T-cell (primary cell): ENCODE measurements at regions of chr13 and their contacts with region 1.

Region 1: DNA sequence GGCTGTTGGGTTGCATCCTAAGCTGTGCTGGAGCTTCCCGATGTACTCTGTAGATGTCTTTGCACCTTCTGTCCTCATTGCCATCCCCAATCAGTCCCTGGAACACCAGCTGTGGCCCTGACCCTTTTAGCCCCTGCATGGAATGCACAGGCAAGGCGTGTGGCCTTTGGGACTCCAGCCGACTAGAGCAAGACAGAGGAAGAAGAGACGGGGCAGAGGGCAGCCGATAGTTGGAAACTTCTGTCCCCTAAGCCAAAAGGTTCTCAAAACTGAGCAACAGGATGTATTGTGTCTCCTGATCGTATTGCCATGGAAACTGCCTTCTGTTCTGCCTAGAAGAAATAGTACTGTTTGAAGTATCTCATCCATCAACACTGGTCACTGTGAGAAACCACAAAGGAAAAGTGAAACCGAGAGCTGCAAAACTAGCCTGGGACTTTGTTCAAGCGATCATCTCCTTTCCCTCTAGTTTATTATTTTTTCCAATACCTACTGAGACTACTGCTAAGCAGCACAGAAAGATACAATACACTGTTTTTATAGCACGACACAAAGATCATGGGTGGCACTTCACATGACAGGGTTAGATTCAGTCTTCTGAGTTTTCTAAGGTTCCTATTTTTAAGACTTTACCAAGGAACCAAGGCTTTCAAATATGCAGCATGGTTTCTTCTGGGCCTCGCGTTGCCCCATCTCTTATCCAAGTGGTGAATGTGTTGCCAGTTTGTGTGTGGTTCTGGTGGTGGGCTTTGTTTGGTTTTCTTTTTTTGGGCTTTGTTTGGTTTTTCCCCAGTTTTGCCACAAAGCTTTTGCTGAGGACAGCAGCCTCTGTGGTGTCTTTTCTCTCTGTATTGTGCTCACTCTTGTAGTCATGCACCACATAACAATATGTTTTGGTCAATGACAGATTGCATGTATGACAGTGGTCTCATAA is 49.2 kb upstream of the GPR183 start:
- DNase-seq: peak in 32 of 35 experiments; percentile 32 to 93 (median 60)
- ATAC-seq: peak; percentile 51 to 73 (median 55)
- H3K4me3 ChIP-seq: peak overlapping the region in 1 of 2 donors; percentile 28
- H3K4me3 Mint-ChIP-seq: peak overlapping the region; percentile 64 to 73 (median 65)
- H3K27ac ChIP-seq: peak overlapping the region; percentile 100
- H3K27ac Mint-ChIP-seq: peak overlapping the region; percentile 99
- H3K4me1 ChIP-seq: peaks cover 92 to 95% of the 10 kb centered on the region in 2 experiments
- H3K4me1 Mint-ChIP-seq: peaks cover 98 to 100% (median 99%) of the 10 kb centered on the region in 3 donors
- H3K27me3 ChIP-seq: no peaks in the 10 kb centered on the region
- H3K27me3 Mint-ChIP-seq: no peaks in the 10 kb centered on the region

Region 2: DNA sequence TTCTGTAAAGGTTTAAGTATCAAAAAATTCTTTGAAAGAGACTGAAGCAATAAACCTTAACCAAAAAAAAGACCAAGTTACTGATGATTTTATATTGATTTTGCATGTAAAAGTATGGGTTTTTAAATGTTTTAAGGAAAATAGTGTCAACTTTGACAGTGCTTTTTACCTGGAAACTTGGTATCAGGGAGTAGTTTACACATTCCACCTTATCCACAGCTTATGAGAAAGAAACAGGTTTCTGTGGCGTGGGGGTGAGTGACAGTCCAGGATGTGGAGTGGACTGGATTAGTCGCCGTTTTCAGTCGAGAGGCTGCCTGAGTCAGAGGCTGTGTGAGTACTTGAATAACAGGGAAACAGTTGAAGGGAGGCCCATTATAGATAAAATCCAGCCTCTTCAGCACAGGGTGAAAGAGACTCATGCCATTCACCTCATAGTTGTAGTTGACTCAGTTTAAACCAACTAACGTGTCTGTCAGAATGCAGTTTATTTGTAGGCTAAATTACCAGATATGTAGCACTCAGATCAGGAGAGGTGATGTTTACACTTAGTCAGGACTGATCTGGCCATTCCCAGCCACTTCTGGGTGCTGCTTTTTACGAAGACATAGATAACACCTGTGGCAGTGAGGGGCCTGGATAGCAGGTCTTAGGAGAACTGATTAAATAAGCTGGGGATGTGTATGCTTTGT is 48.6 kb before region 1 on chr13:
- CTCF ChIA-PET with region 1: interaction called in 1 of 2 experiments, 10 read pairs
- POLR2A ChIA-PET with region 1: interaction called, 3 to 24 read pairs
- DNase-seq: peak in 5 of 35 experiments; percentile 14 to 54 (median 45)
- ATAC-seq: peak; percentile 22 to 40 (median 29)
- H3K4me3 ChIP-seq: peak overlapping the region in 1 of 2 donors; percentile 9
- H3K4me3 Mint-ChIP-seq: peak overlapping the region; percentile 94 to 99 (median 96)
- H3K27ac ChIP-seq: peak overlapping the region; percentile 80
- H3K27ac Mint-ChIP-seq: peak overlapping the region; percentile 96
- H3K4me1 ChIP-seq: peaks cover 46 to 53% of the 10 kb centered on the region in 2 experiments
- H3K4me1 Mint-ChIP-seq: peaks cover 78 to 95% (median 83%) of the 10 kb centered on the region in 3 donors
- H3K27me3 ChIP-seq: no peaks in the 10 kb centered on the region
- H3K27me3 Mint-ChIP-seq: no peaks in the 10 kb centered on the region

Region 3: GRCh38 chr13:99322297-99323103 is 33.9 kb before region 1 on chr13:
- CTCF ChIA-PET with region 1: interaction called in 1 of 2 experiments, 12 read pairs
- POLR2A ChIA-PET with region 1: interaction called, 4 to 6 read pairs
- DNase-seq: peak in 16 of 35 experiments; percentile 6 to 75 (median 28)
- ATAC-seq: peak; percentile 85 to 91 (median 89)
- H3K4me3 ChIP-seq: peak overlapping the region in 1 of 2 donors; percentile 19
- H3K4me3 Mint-ChIP-seq: peak overlapping the region; percentile 49 to 57 (median 55)
- H3K27ac ChIP-seq: peak overlapping the region; percentile 93
- H3K27ac Mint-ChIP-seq: peak overlapping the region; percentile 92 to 98
- H3K4me1 ChIP-seq: peaks cover 28 to 50% of the 10 kb centered on the region in 2 experiments
- H3K4me1 Mint-ChIP-seq: peaks cover 73 to 86% (median 75%) of the 10 kb centered on the region in 3 donors
- H3K27me3 ChIP-seq: no peaks in the 10 kb centered on the region
- H3K27me3 Mint-ChIP-seq: no peaks in the 10 kb centered on the region

Region 4: DNA sequence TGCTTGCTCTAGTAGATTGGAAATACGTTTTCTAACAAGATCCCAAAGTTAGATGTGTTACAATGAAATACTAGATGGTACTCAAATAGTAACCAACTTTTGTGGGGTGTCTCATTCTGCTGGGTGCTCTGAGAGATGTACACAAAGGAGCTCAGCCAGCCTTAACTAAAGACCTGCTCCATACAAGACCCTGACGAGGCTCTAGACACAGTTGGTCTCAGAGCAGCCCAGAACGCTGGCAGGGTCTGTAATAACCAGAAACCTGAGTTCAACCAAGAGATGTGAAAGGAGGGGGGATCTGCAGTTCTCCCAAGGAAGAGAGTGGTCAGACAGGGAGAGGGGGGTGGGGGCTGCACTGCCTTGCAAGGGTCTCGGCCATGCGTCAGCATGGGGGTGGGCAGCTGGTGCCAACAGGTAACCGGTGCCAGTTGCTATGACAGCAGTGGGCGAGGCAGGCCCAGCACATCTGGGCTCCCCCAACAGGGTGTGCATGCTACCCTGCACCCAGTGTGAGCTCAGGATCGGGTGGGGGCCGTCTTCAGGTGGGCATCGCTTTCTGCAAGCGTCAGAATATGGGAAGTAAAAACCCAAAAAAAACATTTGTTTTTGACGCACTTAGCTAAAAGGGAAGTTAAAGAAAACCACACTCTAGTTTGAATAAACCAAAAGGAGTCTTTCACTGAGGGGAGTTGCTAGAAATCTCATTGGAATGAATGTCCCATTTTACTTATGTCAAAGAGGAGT is 18.7 kb after region 1 on chr13:
- CTCF ChIA-PET with region 1: interaction called, 4 to 15 read pairs
- POLR2A ChIA-PET with region 1: interaction called, 10 to 13 read pairs
- DNase-seq: peak in 34 of 35 experiments; percentile 50 to 93 (median 84)
- ATAC-seq: peak; percentile 64 to 92 (median 70)
- H3K4me3 ChIP-seq: no peak overlapping the region
- H3K4me3 Mint-ChIP-seq: peak overlapping the region; percentile 49 to 72 (median 51)
- H3K27ac ChIP-seq: peak overlapping the region; percentile 88
- H3K27ac Mint-ChIP-seq: peak overlapping the region; percentile 98 to 100
- H3K4me1 ChIP-seq: peaks cover 68 to 69% of the 10 kb centered on the region in 2 experiments
- H3K4me1 Mint-ChIP-seq: peaks cover 87 to 94% (median 94%) of the 10 kb centered on the region in 3 donors
- H3K27me3 ChIP-seq: no peaks in the 10 kb centered on the region
- H3K27me3 Mint-ChIP-seq: no peaks in the 10 kb centered on the region

Region 5: GRCh38 chr13:99393791-99394735 is 37.6 kb after region 1 on chr13:
- CTCF ChIA-PET with region 1: no interaction called
- POLR2A ChIA-PET with region 1: no interaction called
- DNase-seq: no peak
- ATAC-seq: no peak
- H3K4me3 ChIP-seq: no peak overlapping the region
- H3K4me3 Mint-ChIP-seq: no peak overlapping the region
- H3K27ac ChIP-seq: no peak overlapping the region
- H3K27ac Mint-ChIP-seq: peak overlapping the region in 1 of 2 donors; percentile 68
- H3K4me1 ChIP-seq: peaks cover 0 to 19% of the 10 kb centered on the region in 2 experiments
- H3K4me1 Mint-ChIP-seq: peaks cover 26 to 40% (median 27%) of the 10 kb centered on the region in 3 donors
- H3K27me3 ChIP-seq: no peaks in the 10 kb centered on the region
- H3K27me3 Mint-ChIP-seq: no peaks in the 10 kb centered on the region

Region 6: DNA sequence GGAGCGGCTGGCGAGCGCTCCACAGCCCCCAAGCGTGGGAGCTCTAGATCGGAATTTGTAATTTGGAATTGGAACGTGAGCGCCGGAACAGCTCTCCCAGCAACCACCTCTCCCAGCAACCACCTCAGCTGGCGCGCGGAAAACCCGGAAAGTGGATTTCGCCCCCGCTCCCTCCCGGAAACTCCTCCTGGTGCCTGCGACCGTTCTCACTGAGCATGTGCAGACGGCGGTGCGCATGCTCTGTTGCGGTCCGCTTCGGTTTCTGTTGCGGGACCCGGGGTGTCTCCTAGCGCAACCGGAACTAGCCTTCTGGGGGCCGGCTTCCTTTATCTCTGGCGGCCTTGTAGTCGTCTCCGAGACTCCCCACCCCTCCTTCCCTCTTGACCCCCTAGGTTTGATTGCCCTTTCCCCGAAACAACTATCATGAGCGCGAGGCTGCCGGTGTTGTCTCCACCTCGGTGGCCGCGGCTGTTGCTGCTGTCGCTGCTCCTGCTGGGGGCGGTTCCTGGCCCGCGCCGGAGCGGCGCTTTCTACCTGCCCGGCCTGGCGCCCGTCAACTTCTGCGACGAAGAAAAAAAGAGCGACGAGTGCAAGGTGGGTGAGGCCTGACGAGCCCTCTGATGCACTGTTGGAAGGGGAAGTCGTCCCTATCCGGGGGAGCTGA is 144.9 kb after region 1 on chr13 and contains the start of gene TM9SF2:
- CTCF ChIA-PET with region 1: no interaction called
- POLR2A ChIA-PET with region 1: interaction called, 3 to 10 read pairs
- DNase-seq: peak; percentile 87 to 99 (median 93)
- ATAC-seq: peak; percentile 59 to 67 (median 62)
- H3K4me3 ChIP-seq: peak within 1 kb of the TSS; percentile 94 to 96
- H3K4me3 Mint-ChIP-seq: peak within 1 kb of the TSS; percentile 96 to 98 (median 96)
- H3K27ac ChIP-seq: peak within 1 kb of the TSS; percentile 86
- H3K27ac Mint-ChIP-seq: peak within 1 kb of the TSS; percentile 95 to 96
- H3K4me1 ChIP-seq: peaks cover 60 to 62% of the 10 kb centered on the region in 2 experiments
- H3K4me1 Mint-ChIP-seq: peaks cover 78 to 89% (median 85%) of the 10 kb centered on the region in 3 donors
- H3K27me3 ChIP-seq: no peaks in the 10 kb centered on the region
- H3K27me3 Mint-ChIP-seq: no peaks in the 10 kb centered on the region
- total RNA-seq, gene TM9SF2: 43.2 to 54.0 (median 48.8) TPM

Region 7: GRCh38 chr13:99647596-99647985 is 291.2 kb after region 1 on chr13:
- CTCF ChIA-PET with region 1: no interaction called
- POLR2A ChIA-PET with region 1: no interaction called
- DNase-seq: no peak
- ATAC-seq: no peak
- H3K4me3 ChIP-seq: no peak overlapping the region
- H3K4me3 Mint-ChIP-seq: no peak overlapping the region
- H3K27ac ChIP-seq: no peak overlapping the region
- H3K27ac Mint-ChIP-seq: no peak overlapping the region
- H3K4me1 ChIP-seq: no peaks in the 10 kb centered on the region
- H3K4me1 Mint-ChIP-seq: peaks cover 0 to 7% (median 0%) of the 10 kb centered on the region in 3 donors
- H3K27me3 ChIP-seq: no peaks in the 10 kb centered on the region
- H3K27me3 Mint-ChIP-seq: no peaks in the 10 kb centered on the region